CD14-positive monocyte (primary cell): ENCODE measurements at regions of chr5 and their contacts with region 1.

Region 1: GRCh38 chr5:168486136-168486879 is at the start of gene RARS1:
- DNase-seq: peak; percentile 90 to 95 (median 92)
- H3K4me3 ChIP-seq: peak within 1 kb of the TSS; percentile 63 to 90 (median 71)
- H3K4me3 Mint-ChIP-seq: peak within 1 kb of the TSS; percentile 100
- H3K27ac ChIP-seq: peak within 1 kb of the TSS; percentile 3 to 81
- H3K27ac Mint-ChIP-seq: peak within 1 kb of the TSS; percentile 85 to 95 (median 93)
- H3K4me1 ChIP-seq: peaks cover 9 to 15% of the 10 kb centered on the region in 2 donors
- H3K4me1 Mint-ChIP-seq: peaks cover 13% of the 10 kb centered on the region
- H3K27me3 ChIP-seq: no peaks in the 10 kb centered on the region
- H3K27me3 Mint-ChIP-seq: peaks cover 2 to 9% (median 4%) of the 10 kb centered on the region in 3 donors
- CTCF ChIP-seq: peak; percentile 95
- polyA plus RNA-seq, gene RARS1: 16.1 to 27.0 (median 23.2) TPM

Region 2: GRCh38 chr5:168502563-168503237 is 16.4 kb after region 1 on chr5:
- intact Hi-C with region 1: no loop called
- DNase-seq: no peak
- H3K4me3 ChIP-seq: no peak overlapping the region
- H3K4me3 Mint-ChIP-seq: no peak overlapping the region
- H3K27ac ChIP-seq: no peak overlapping the region
- H3K27ac Mint-ChIP-seq: no peak overlapping the region
- H3K4me1 ChIP-seq: no peaks in the 10 kb centered on the region
- H3K4me1 Mint-ChIP-seq: no peaks in the 10 kb centered on the region
- H3K27me3 ChIP-seq: no peaks in the 10 kb centered on the region
- H3K27me3 Mint-ChIP-seq: no peaks in the 10 kb centered on the region
- CTCF ChIP-seq: no peak

Region 3: DNA sequence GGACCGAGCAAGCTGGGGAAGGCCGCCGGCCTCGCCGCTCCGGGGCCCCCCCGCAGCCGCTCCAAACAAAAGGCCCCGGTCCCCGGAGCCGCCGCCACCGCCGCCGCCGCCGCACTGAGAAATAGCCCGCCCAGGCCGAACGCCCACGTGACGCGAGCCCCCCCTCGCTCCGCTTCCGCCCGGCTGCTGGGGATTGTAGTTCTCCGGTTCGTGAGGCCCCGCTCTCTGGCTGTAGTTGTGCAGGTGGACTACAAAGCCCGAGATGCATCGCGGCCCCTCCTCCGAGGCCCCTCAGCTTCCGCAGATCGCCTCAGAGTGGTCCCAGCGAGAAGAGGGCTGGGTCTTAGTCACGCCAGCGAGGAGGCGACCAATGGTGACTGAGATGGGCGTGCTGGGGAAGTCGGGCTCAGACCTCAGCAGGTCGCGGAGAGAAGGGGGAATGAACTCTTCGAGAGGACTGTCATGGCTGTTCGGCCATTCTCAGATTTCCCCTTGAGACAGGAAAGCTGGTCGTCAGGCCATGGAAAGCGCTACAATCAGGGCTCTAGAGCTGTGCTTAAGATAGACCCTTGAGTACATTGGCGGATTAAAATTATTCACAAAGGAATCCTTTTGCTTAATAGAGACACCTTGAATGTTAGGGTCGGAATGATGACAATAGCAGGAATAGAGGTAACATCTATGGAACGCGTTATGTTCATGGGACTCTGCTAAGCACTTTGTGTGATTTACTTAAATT is 93.3 kb after region 1 on chr5:
- intact Hi-C with region 1: loop called (anchors 5 kb)
- DNase-seq: peak; percentile 97 to 99 (median 98)
- H3K4me3 ChIP-seq: peak overlapping the region; percentile 44 to 82 (median 77)
- H3K4me3 Mint-ChIP-seq: peak overlapping the region; percentile 85 to 96
- H3K27ac ChIP-seq: peak overlapping the region; percentile 82 to 88
- H3K27ac Mint-ChIP-seq: peak overlapping the region; percentile 87 to 97 (median 94)
- H3K4me1 ChIP-seq: peaks cover 21 to 27% of the 10 kb centered on the region in 2 donors
- H3K4me1 Mint-ChIP-seq: peaks cover 37% of the 10 kb centered on the region
- H3K27me3 ChIP-seq: no peaks in the 10 kb centered on the region
- H3K27me3 Mint-ChIP-seq: peaks cover 0 to 6% (median 0%) of the 10 kb centered on the region in 3 donors
- CTCF ChIP-seq: no peak